PC-3 (cell line): ENCODE measurements at regions of chr9 and their contacts with region 1.

Region 1: GRCh38 chr9:68567565-68567964 is 26.9 kb upstream of the TMEM252 start:
- DNase-seq: no peak
- ATAC-seq: no peak
- H3K4me3 ChIP-seq: no peak overlapping the region
- H3K27ac ChIP-seq: no peak overlapping the region
- H3K4me1 ChIP-seq: no peaks in the 10 kb centered on the region; the same call in 1 of the 2 replicates
- H3K27me3 ChIP-seq: no peaks in the 10 kb centered on the region
- CTCF ChIP-seq: no peak

Region 2: GRCh38 chr9:68515326-68515901 is 52.2 kb before region 1 on chr9:
- CTCF ChIA-PET with region 1: no interaction called
- POLR2A ChIA-PET with region 1: no interaction called
- intact Hi-C with region 1: loop called (anchors 5 kb)
- DNase-seq: peak; percentile 69
- ATAC-seq: no peak
- H3K4me3 ChIP-seq: no peak overlapping the region
- H3K27ac ChIP-seq: no peak overlapping the region
- H3K4me1 ChIP-seq: peaks cover 25% of the 10 kb centered on the region
- H3K27me3 ChIP-seq: no peaks in the 10 kb centered on the region
- CTCF ChIP-seq: no peak

Region 3: GRCh38 chr9:68609901-68610415 is 42.4 kb after region 1 on chr9:
- CTCF ChIA-PET with region 1: no interaction called
- POLR2A ChIA-PET with region 1: no interaction called
- intact Hi-C with region 1: no loop called
- DNase-seq: no peak
- ATAC-seq: no peak
- H3K4me3 ChIP-seq: no peak overlapping the region
- H3K27ac ChIP-seq: no peak overlapping the region
- H3K4me1 ChIP-seq: no peaks in the 10 kb centered on the region
- H3K27me3 ChIP-seq: peaks cover 62% of the 10 kb centered on the region
- CTCF ChIP-seq: no peak